Dendritic cell treated with granulocyte-macrophage colony-stimulating factor and Interleukin-4, amounts not matched to agents 40 ng/mL and 50 ng/mL, for 4 days (primary cell): ENCODE measurements at regions of chr10 and their contacts with region 1.

Region 1: GRCh38 chr10:17599089-17599488 is 18.1 kb downstream of the HACD1 start:
- H3K4me3 Mint-ChIP-seq: no peak overlapping the region
- H3K27ac Mint-ChIP-seq: no peak overlapping the region
- H3K4me1 Mint-ChIP-seq: peaks cover 8% of the 10 kb centered on the region
- H3K27me3 Mint-ChIP-seq: no peaks in the 10 kb centered on the region

Region 2: GRCh38 chr10:16843252-16843870 is 755.7 kb before region 1 on chr10:
- intact Hi-C with region 1: loop called (anchors 5 kb)
- H3K4me3 Mint-ChIP-seq: no peak overlapping the region
- H3K27ac Mint-ChIP-seq: no peak overlapping the region
- H3K4me1 Mint-ChIP-seq: no peaks in the 10 kb centered on the region
- H3K27me3 Mint-ChIP-seq: no peaks in the 10 kb centered on the region

Region 3: DNA sequence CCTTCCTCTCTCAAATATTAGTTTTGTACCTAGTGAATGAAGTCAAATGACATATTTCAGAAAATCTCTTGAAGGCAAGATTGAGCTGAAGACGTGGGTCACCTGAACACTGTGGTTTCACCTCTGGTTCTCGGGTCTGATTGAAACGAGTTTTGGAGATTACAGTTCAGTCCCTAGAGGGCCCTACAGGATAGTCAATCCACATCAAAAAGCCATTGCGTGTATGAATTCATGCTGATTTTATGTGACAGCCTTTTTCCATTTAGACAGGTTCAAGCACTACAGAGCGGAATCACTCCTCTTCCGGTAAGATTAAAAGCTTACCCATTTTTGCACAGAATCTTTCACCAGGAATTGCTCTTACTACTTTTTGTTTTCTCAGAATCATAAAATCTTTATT is 308.9 kb before region 1 on chr10:
- intact Hi-C with region 1: loop called (anchors 2 kb)
- H3K4me3 Mint-ChIP-seq: no peak overlapping the region
- H3K27ac Mint-ChIP-seq: no peak overlapping the region
- H3K4me1 Mint-ChIP-seq: no peaks in the 10 kb centered on the region
- H3K27me3 Mint-ChIP-seq: peaks cover 14% of the 10 kb centered on the region

Region 4: GRCh38 chr10:17409170-17409733 is 189.8 kb before region 1 on chr10:
- intact Hi-C with region 1: loop called (anchors 1 kb)
- H3K4me3 Mint-ChIP-seq: no peak overlapping the region
- H3K27ac Mint-ChIP-seq: no peak overlapping the region
- H3K4me1 Mint-ChIP-seq: no peaks in the 10 kb centered on the region
- H3K27me3 Mint-ChIP-seq: no peaks in the 10 kb centered on the region

Region 5: GRCh38 chr10:17454161-17455014 is 144.7 kb before region 1 on chr10 and contains the start of gene ST8SIA6:
- intact Hi-C with region 1: loop called (anchors 5 kb)
- H3K4me3 Mint-ChIP-seq: peak within 1 kb of the TSS; percentile 92
- H3K27ac Mint-ChIP-seq: peak within 1 kb of the TSS; percentile 88
- H3K4me1 Mint-ChIP-seq: peaks cover 37% of the 10 kb centered on the region
- H3K27me3 Mint-ChIP-seq: peaks cover 24% of the 10 kb centered on the region